WTC11 (cell line): ENCODE measurements at regions of chr4 and their contacts with region 1.

Region 1: GRCh38 chr4:99946356-99947189 is at the start of gene DNAJB14:
- DNase-seq: peak; percentile 71
- ATAC-seq: peak; percentile 29
- H3K4me3 Mint-ChIP-seq: peak within 1 kb of the TSS; percentile 99
- H3K27ac Mint-ChIP-seq: peak within 1 kb of the TSS; percentile 98
- H3K4me1 Mint-ChIP-seq: peaks cover 26% of the 10 kb centered on the region
- H3K27me3 Mint-ChIP-seq: no peaks in the 10 kb centered on the region
- CTCF ChIP-seq: no peak
- total RNA-seq, gene DNAJB14: 35.5 to 40.4 TPM (median 39.9 TPM) in 3 replicates

Region 2: GRCh38 chr4:99894161-99894997 is 52.2 kb before region 1 on chr4 and contains the start of gene LAMTOR3:
- CTCF ChIA-PET with region 1: interaction called, 6 read pairs
- POLR2A ChIA-PET with region 1: interaction called, 10 read pairs
- DNase-seq: peak; percentile 80
- ATAC-seq: peak; percentile 95
- H3K4me3 Mint-ChIP-seq: peak within 1 kb of the TSS; percentile 94
- H3K27ac Mint-ChIP-seq: peak within 1 kb of the TSS; percentile 93
- H3K4me1 Mint-ChIP-seq: peaks cover 9% of the 10 kb centered on the region
- H3K27me3 Mint-ChIP-seq: no peaks in the 10 kb centered on the region
- CTCF ChIP-seq: no peak
- total RNA-seq, gene LAMTOR3: 21.2 to 25.5 TPM (median 24.4 TPM) in 3 replicates

Region 3: DNA sequence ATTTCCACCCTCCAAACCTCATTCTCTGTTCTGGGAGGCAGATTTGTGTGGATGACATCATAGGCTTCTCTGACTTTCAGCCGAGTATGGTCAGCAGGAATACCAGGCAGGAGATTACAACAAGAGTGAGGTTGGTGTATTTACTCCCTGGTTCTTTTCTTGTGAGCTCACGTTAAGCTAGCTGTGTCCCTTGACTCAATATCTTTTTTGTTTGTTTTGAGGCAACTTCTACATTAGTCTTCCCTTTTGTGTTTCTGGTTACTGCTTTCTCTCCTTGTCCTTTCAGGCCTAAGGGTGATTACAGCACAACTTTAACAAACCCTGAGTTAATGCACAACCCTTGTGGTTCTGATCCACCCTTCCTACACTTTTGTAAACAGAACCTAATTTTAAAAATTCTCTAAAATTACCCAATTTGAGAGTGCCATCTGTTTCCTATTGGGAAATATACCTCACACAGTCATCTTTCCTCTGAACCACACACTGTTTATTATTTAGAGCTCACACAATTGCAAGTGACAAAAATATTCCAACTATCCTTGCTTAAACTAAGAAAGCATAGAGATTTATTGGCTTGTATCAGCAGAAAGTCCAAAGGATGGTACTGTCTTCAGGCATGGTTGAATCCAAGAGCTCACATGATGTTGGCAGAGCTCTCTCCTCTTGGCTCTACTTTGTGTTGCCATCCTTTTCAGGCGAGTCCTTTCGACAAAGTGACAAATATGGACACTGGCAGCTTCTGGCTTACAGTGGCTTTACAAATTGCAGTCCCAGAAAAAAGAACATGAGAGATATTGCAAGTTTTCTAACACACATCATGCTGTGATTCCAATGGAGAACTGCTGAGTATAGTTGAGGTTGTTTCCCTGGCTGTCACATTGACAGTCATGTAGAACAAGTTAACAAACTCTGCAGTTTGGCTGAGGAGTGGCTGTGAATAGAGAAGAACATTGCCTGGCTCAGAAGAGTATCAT is 394.2 kb after region 1 on chr4:
- CTCF ChIA-PET with region 1: no interaction called
- POLR2A ChIA-PET with region 1: no interaction called
- DNase-seq: no peak
- ATAC-seq: no peak
- H3K4me3 Mint-ChIP-seq: no peak overlapping the region
- H3K27ac Mint-ChIP-seq: no peak overlapping the region
- H3K4me1 Mint-ChIP-seq: peaks cover 11% of the 10 kb centered on the region
- H3K27me3 Mint-ChIP-seq: no peaks in the 10 kb centered on the region
- CTCF ChIP-seq: no peak